ENCODE measurements at regions of chr19 and their contacts with region 1.

Region 1: DNA sequence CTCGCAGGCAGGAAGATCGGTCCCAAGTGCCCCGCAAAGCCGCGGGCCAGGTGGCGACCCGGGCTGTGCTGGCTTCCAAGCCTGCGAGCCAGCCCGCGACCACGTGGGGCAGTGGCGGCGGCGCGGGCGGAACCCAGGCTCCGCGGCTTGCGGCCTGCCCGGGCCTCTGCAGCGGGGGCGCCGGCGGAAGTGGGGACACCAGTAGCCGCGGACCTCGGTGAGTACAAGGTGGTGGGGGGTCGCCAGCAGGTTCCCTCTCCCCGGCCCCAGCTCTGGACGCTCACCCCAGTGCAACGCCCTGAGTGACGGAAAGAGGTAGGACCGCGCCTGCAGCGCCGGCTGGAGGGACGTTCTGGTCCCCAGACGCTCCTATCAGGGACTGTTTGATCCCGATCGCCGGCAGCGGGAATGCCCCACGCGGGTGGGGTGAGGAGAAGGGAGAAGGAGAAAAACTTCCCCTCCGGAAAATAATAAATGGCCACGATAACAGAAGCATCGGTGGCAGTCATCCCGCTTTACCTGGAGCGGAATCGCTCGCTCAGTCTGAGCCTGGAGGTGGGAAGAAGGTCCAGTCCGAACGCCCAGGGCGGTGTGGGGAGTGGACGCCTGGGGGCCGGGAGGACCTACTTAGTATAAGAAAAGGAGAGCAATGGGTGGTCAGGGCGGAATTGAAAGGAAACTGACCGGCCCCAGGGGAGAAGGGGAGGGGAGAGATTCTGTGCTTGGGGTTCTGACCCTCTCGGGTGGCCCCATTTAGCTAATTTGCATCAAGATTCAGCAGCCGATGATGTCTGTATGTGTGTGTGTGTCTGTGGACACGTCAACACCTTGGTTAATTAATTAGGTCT is at the start of gene GEMIN7:
- DNase-seq: peak; percentile 90
- ATAC-seq: peak; percentile 65
- H3K4me3 Mint-ChIP-seq: peak within 1 kb of the TSS; percentile 99
- H3K27ac Mint-ChIP-seq: peak within 1 kb of the TSS; percentile 88
- H3K4me1 Mint-ChIP-seq: peaks cover 43% of the 10 kb centered on the region
- H3K27me3 Mint-ChIP-seq: no peaks in the 10 kb centered on the region
- total RNA-seq, gene GEMIN7: 35.4 to 35.5 TPM

Region 2: DNA sequence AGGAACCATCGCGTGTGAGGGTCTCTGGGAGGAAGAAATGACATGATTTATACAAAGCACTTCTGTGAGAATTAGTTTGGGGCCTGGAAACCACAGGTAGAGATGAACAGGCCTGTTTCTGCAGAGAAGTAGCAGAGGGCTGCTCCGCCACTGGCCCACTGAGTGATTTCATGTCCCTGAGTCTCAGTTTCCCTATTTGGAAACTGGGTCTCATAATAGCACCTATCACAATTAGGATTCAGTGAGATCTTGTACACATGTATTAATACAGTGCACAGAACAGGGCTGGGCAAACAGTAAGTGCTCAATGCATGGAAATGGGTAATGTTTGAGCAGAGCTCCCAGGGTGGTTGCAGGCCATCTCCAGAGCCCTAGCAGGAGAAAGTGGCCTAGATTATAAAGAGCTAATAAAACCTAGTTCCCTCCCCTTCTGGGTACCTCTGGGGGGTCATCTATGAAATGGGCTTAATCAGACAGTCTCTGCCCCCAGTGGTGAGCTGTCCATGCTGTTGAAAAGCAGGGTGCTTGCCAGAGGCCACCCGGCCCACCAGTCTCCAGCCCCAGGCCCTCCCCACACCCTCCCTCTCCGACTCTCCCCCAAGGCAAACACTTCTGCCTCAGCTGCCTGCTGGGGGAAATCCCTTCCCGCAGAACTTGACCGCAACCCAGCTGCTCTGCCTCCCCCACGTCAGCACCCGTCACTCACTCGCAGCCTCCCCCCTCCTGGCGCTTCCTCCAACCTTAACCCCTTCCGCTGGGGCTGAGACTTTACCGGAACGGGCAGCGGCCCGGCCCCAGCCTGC is 326.3 kb before region 1 on chr19:
- CTCF ChIA-PET with region 1: no interaction called
- POLR2A ChIA-PET with region 1: no interaction called
- intact Hi-C with region 1: loop called in 1 of 2 experiments (anchors 5 kb)
- DNase-seq: peak; percentile 98
- ATAC-seq: peak; percentile 79
- H3K4me3 Mint-ChIP-seq: peak overlapping the region; percentile 94
- H3K27ac Mint-ChIP-seq: peak overlapping the region; percentile 97
- H3K4me1 Mint-ChIP-seq: peaks cover 54% of the 10 kb centered on the region
- H3K27me3 Mint-ChIP-seq: no peaks in the 10 kb centered on the region

Region 3: DNA sequence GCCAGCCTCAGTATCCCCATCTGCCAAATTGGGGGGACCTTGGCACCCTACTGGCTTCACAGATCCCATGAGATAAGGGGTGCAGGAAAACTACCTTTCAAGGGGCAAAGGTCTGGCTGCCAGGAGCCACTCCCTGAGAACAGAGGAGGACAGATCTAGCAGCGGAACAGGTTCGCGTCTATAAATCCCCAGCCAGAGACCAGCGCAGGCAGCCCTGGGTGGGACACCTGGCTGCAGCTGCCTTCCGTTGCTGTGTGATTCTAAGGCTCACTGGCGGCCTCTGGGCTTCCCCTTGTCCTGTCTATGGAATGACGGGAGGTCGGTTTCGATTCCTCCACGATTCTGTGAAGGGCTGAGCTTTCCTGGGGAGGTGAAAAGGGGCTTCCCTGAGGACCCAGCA is 70.7 kb before region 1 on chr19:
- CTCF ChIA-PET with region 1: no interaction called
- POLR2A ChIA-PET with region 1: no interaction called
- intact Hi-C with region 1: no loop called
- DNase-seq: no peak
- ATAC-seq: no peak
- H3K4me3 Mint-ChIP-seq: no peak overlapping the region
- H3K27ac Mint-ChIP-seq: no peak overlapping the region
- H3K4me1 Mint-ChIP-seq: peaks cover 5% of the 10 kb centered on the region
- H3K27me3 Mint-ChIP-seq: no peaks in the 10 kb centered on the region

Region 4: DNA sequence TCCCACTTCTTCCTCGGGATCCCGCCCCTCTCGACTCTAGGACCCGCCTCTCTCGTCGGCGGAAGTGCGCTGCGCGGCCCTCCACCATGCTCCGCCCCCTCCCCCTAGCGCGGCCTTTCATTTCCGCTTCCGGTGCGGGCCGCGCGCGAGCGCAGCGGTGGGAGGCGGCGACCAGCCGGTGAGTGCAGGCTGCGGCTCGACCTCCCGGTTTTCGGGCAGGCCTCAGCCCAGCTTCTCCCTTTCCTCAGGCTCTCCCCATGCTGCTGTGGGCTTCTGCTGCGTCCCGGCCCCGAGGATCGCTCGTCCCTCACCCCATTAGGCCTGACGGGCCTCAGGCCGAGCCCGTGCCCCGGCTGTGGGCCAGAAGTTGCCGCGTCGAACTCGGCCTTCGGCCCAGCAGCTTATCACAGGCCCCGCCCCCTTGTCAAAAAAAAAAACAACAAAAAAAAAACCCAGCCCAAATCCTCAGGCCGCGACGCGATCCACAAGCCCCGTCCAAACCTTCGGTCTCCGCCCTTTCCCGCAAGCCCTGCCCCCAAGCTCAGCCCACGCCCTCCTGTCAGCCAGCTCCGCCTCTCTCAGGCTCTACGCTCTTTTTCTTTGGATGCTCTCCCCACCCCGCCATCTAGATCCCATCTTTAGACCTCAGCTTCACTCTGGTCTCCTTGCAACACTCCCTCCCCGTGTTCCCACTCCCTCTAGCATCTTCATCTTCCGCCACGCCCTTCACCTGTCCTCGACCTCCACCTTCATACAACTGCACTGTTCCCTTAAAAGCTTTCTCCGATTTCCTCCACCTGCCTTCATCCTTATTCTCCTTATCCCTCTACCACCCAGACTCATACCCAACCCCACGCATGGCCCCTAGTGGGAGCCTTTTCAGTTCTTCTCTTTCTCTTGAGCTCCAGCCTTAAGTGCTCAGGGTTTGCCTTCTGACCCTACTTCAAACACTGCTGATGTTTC is 40.1 kb before region 1 on chr19 and contains the start of gene CLASRP:
- CTCF ChIA-PET with region 1: no interaction called
- POLR2A ChIA-PET with region 1: no interaction called
- intact Hi-C with region 1: loop called in 1 of 2 experiments (anchors 1 kb)
- DNase-seq: peak; percentile 94
- ATAC-seq: peak; percentile 96
- H3K4me3 Mint-ChIP-seq: peak within 1 kb of the TSS; percentile 97
- H3K27ac Mint-ChIP-seq: peak within 1 kb of the TSS; percentile 96
- H3K4me1 Mint-ChIP-seq: peaks cover 32% of the 10 kb centered on the region
- H3K27me3 Mint-ChIP-seq: no peaks in the 10 kb centered on the region
- total RNA-seq, gene CLASRP: 101 to 103 TPM

Region 5: GRCh38 chr19:45125926-45126493 is 46.7 kb after region 1 on chr19:
- CTCF ChIA-PET with region 1: no interaction called
- POLR2A ChIA-PET with region 1: no interaction called
- intact Hi-C with region 1: loop called in 1 of 2 experiments (anchors 5 kb)
- DNase-seq: peak; percentile 87
- ATAC-seq: peak; percentile 85
- H3K4me3 Mint-ChIP-seq: no peak overlapping the region
- H3K27ac Mint-ChIP-seq: no peak overlapping the region
- H3K4me1 Mint-ChIP-seq: peaks cover 24% of the 10 kb centered on the region
- H3K27me3 Mint-ChIP-seq: no peaks in the 10 kb centered on the region